Gastrocnemius medialis (tissue), 4 donors: ENCODE measurements at regions of chr20 and their contacts with region 1.

Region 1: GRCh38 chr20:4014031-4014474 is 1.3 kb downstream of the RNF24 start:
- DNase-seq: no peak
- ATAC-seq: peak; percentile 35 to 65
- H3K4me3 ChIP-seq: peak overlapping the region in 3 of 4 donors; percentile 72 to 88 (median 76)
- H3K27ac ChIP-seq: peak overlapping the region in 1 of 4 donors; percentile 69
- H3K4me1 ChIP-seq: peaks cover 6 to 7% of the 10 kb centered on the region in 2 donors
- H3K27me3 ChIP-seq: no peaks in the 10 kb centered on the region
- CTCF ChIP-seq: peak in 4 of 5 experiments; percentile 13 to 44 (median 28)
- POLR2A ChIP-seq: no peak

Region 2: GRCh38 chr20:4064144-4064909 is 50.3 kb after region 1 on chr20:
- in situ Hi-C with region 1: no loop called
- intact Hi-C with region 1: loop called (anchors 5 kb)
- DNase-seq: peak; percentile 69 to 83
- ATAC-seq: peak; percentile 82 to 83
- H3K4me3 ChIP-seq: no peak overlapping the region
- H3K27ac ChIP-seq: peak overlapping the region; percentile 58 to 77 (median 63)
- H3K4me1 ChIP-seq: peaks cover 10 to 28% of the 10 kb centered on the region in 2 donors
- H3K27me3 ChIP-seq: no peaks in the 10 kb centered on the region
- CTCF ChIP-seq: no peak
- POLR2A ChIP-seq: no peak

Region 3: GRCh38 chr20:4082406-4083097 is 68.5 kb after region 1 on chr20:
- in situ Hi-C with region 1: loop called in 1 of 4 experiments (anchors 5 kb)
- intact Hi-C with region 1: loop called (anchors 1 kb)
- DNase-seq: peak in 1 of 2 donors; percentile 36
- ATAC-seq: no peak
- H3K4me3 ChIP-seq: no peak overlapping the region
- H3K27ac ChIP-seq: peak overlapping the region in 1 of 4 donors; percentile 40
- H3K4me1 ChIP-seq: no peaks in the 10 kb centered on the region
- H3K27me3 ChIP-seq: no peaks in the 10 kb centered on the region
- CTCF ChIP-seq: no peak
- POLR2A ChIP-seq: no peak